Activated CD4-positive, alpha-beta T cell treated with anti-CD3 and anti-CD28 coated beads for 36 hours (primary cell): ENCODE measurements at regions of chr11 and their contacts with region 1.

Region 1: GRCh38 chr11:66311965-66312548 is 4.8 kb downstream of the CD248 start:
- DNase-seq: peak; percentile 98
- ATAC-seq: peak; percentile 83
- H3K4me3 Mint-ChIP-seq: peak overlapping the region; percentile 79
- H3K27ac Mint-ChIP-seq: peak overlapping the region; percentile 91
- H3K4me1 Mint-ChIP-seq: peaks cover 33% of the 10 kb centered on the region
- H3K27me3 Mint-ChIP-seq: no peaks in the 10 kb centered on the region

Region 2: DNA sequence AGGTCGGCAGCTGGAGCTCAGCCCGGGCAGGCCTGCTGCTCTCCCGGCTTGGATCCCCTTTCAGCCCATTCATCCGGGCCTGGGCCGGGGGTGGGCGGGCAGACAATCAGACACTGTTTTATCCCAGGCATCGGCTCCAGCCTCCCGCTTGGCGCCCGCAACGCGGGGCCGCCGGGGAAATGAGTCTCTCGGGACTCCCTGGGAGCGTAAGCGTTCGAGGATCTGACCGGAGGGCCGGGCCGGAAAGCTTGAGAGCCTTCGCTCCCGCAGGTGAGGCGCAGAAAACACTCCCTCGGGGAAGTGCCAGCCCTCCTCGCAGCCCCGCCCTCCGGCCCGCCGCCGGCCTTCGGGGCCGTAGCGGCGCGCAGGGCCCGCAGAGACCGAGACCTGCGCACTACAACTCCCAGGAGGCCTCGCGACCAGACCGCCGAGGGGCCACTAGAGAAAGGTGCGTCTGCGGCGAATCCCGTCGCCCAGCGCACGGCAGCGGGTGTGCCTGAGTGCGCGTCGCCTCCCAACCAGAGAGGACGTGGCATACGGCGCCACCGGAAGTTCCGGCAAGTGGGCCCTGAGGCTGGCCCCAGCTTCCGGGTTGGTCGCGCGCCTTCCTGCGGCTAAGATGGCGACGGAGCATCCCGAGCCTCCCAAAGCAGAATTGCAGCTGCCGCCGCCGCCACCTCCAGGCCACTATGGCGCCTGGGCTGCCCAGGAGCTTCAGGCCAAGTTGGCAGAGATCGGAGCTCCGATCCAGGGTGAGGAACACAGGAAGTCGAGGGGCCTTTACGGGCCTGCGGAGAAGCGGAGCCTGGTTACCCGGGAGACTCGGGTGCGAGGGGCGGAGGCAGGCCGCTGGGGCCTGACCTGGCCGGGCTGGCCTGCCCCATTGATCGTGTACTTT is 260.0 kb before region 1 on chr11 and contains the start of gene SF3B2:
- CTCF ChIA-PET with region 1: no interaction called
- POLR2A ChIA-PET with region 1: no interaction called
- intact Hi-C with region 1: loop called in 1 of 2 experiments (anchors 1 kb)
- DNase-seq: peak; percentile 99
- ATAC-seq: peak; percentile 99
- H3K4me3 Mint-ChIP-seq: peak within 1 kb of the TSS; percentile 91
- H3K27ac Mint-ChIP-seq: peak within 1 kb of the TSS; percentile 95
- H3K4me1 Mint-ChIP-seq: peaks cover 36% of the 10 kb centered on the region
- H3K27me3 Mint-ChIP-seq: peaks cover 4% of the 10 kb centered on the region
- total RNA-seq, gene SF3B2: 265 to 270 TPM

Region 3: DNA sequence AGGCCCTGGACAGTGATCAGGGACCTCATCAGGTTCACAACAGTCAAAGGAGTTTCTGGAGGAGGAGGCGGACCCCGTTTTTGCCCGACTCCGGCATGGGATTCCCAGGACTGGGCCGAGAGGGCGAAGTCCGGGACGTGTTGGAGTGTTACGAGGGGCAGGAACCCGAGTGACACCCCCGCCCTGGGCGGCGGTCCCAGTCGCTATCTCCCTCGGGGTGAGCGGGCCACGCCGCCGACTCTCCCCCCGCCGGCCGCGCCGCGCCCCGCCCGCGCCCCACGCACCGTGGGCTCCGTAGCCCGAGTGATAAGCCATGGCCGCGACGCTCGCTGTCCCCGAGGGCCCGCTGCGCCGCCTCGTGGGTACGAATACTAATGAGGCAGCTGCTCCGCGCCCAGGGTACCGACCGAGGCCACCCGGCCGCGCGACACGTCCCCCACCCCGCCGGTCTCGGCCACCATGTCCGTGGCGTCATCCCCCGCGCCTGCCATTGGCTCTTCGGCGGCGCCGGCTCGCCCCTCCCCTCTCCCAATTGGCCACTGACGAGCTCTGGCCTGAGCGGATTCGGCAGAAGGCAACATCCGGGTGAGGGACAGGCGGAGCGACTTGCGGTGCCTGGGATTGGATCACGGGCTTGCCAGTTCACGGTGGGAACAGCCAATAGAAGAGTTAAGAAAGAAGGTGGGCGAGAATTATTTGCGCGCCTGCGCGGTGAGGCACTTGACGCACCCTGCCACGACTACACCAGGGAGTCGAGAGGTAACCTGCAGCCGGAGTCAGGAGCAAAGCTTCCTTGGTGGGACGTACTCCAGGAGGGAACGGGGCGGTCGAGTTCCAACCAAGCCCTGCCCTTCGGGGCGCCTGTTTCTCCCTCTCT is 23.1 kb before region 1 on chr11 and contains the start of gene YIF1A:
- CTCF ChIA-PET with region 1: interaction called, 23 read pairs
- POLR2A ChIA-PET with region 1: interaction called, 8 read pairs
- intact Hi-C with region 1: loop called (anchors 1 kb)
- DNase-seq: peak; percentile 99
- ATAC-seq: peak; percentile 97
- H3K4me3 Mint-ChIP-seq: peak within 1 kb of the TSS; percentile 89
- H3K27ac Mint-ChIP-seq: peak within 1 kb of the TSS; percentile 85
- H3K4me1 Mint-ChIP-seq: peaks cover 22% of the 10 kb centered on the region
- H3K27me3 Mint-ChIP-seq: peaks cover 8% of the 10 kb centered on the region
- total RNA-seq, gene YIF1A: 47.5 to 49.8 TPM

Region 4: DNA sequence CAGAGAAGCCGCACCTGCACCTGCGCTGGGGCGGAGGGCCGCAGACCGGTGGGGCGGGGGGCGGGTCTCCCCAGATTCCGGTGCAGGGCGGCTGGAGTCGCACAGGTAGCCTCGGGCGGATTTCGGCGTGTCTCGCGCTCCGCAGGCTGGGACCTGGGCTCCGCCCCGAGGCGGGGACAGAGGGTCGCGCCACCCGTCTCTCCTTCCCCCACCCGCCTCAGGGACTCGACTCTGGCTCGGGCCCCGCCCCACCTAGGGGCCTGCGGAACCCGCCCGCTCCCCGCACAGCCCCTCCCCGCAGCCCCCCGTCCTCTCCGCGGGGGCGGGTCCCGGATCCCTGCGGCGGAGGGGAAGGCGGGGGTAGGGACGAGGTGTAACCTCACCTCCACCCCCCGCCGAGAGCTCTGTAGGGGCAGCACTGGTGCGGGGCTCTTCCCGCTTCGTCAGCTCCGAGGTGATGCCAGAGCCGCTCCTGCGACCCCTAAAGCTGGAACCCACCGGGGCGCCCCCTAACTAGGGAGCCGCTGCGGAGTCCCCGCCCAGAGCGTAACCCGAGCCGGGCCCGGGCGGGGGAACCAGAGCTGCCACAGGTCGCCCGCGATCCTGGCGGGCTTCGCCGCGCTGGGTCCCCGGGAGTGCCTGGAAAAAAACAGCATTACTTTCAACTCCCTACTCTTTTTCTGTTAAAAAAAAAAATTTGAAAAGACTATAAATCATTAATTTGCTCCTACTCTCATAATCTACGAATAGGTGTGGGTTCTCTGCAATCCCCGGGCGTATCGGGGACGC is 59.8 kb after region 1 on chr11 and contains the start of gene SLC29A2:
- CTCF ChIA-PET with region 1: no interaction called
- POLR2A ChIA-PET with region 1: no interaction called
- intact Hi-C with region 1: loop called in 1 of 2 experiments (anchors 1 kb)
- DNase-seq: peak; percentile 92
- ATAC-seq: peak; percentile 87
- H3K4me3 Mint-ChIP-seq: peak within 1 kb of the TSS; percentile 91
- H3K27ac Mint-ChIP-seq: peak within 1 kb of the TSS; percentile 91
- H3K4me1 Mint-ChIP-seq: peaks cover 19% of the 10 kb centered on the region
- H3K27me3 Mint-ChIP-seq: no peaks in the 10 kb centered on the region
- total RNA-seq, gene SLC29A2: 13.6 to 14.4 TPM

Region 5: GRCh38 chr11:66412110-66412509 is 100.1 kb after region 1 on chr11:
- CTCF ChIA-PET with region 1: no interaction called
- POLR2A ChIA-PET with region 1: no interaction called
- intact Hi-C with region 1: no loop called
- DNase-seq: no peak
- ATAC-seq: no peak
- H3K4me3 Mint-ChIP-seq: no peak overlapping the region
- H3K27ac Mint-ChIP-seq: no peak overlapping the region
- H3K4me1 Mint-ChIP-seq: peaks cover 10% of the 10 kb centered on the region
- H3K27me3 Mint-ChIP-seq: peaks cover 37% of the 10 kb centered on the region

Region 6: DNA sequence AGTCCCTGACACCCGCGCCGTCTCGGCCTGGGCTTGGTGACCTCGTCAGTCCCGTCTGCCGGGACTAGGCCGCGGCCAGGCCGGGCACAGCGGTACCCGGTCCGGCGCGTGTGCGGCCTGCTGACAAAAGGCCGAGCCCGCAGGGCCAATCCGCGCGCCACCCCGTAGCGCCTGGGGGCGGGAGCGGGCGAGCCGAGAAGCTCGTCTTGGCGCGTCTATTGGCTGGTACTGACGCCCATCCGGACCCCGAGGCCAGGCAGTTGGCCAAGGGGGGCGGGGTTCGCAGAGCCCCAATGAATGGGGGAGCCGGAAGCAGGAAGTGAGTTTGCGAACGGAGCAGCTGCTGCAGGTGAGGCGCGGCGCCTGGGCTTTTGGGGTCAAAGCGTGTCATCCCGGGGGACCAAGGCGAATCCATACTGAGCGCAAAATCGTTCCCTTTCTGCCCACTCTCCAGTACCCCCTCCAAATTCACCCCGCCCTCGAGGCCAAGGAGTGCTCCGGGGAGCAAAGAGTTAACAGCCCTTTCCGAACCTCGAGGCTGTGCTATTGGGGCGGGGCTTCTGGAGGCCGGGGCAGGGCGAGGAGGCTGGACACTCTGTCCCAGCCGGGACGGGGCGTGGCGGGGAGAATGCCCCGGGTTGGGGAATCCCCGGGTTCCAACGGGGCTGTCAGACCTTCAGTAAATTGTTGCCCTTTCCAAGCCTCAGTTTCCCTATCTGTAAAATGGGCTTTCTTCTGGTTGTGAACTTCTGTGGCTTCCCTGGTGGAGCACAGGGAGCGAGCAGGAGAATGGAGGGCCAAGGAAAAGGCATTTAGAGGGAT is 168.3 kb after region 1 on chr11 and contains the start of gene DPP3:
- CTCF ChIA-PET with region 1: no interaction called
- POLR2A ChIA-PET with region 1: no interaction called
- intact Hi-C with region 1: loop called (anchors 1 kb)
- DNase-seq: peak; percentile 98
- ATAC-seq: peak; percentile 98
- H3K4me3 Mint-ChIP-seq: peak within 1 kb of the TSS; percentile 90
- H3K27ac Mint-ChIP-seq: peak within 1 kb of the TSS; percentile 86
- H3K4me1 Mint-ChIP-seq: peaks cover 22% of the 10 kb centered on the region
- H3K27me3 Mint-ChIP-seq: no peaks in the 10 kb centered on the region
- total RNA-seq, gene DPP3: 87.1 to 91.9 TPM

Region 7: DNA sequence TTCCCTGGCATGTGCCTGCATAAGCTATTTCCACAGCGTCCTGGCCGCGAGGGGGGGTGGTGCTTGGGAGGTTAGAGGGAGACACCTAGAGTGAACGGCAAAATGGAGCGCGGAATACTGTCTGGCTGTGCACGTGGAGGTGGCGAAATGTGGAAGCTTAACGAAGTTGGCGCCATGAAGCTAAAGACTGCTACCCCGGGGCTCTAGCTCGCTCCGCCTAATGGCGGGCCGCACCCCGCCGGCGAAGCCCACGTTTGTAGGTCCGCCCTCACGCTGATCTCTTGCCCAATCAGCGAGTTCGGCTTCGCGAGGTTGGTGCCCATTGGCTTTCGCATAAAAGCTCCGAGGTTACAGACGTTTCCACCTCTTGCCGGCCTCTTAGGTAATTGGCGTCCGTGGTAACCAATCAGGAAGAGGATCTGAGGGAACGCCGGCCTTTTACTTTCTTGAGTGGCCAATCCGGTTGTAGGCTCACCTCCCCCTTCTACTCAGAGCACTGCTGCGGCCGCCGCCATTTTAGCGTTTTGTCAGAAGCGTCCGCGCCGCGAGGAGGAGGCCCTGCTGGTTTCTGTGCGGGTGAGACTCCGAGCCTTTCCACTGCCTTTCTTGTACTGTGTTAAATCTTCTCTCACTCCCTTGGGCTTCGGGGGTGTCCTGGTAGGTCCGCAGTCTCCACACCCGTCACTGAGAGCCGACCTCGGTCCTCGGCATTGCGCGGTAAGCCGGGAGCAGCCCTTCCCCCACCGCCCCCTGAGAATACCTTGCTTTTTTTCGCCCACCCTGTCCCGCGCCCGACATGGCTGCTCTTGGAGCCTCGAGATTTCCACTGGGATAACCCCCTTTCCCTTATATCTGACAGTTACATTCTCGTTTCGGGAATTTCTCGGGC is 326.4 kb after region 1 on chr11 and contains the start of gene RBM4:
- CTCF ChIA-PET with region 1: no interaction called
- POLR2A ChIA-PET with region 1: interaction called, 3 read pairs
- intact Hi-C with region 1: loop called in 1 of 2 experiments (anchors 1 kb)
- DNase-seq: peak; percentile 97
- ATAC-seq: peak; percentile 95
- H3K4me3 Mint-ChIP-seq: peak within 1 kb of the TSS; percentile 89
- H3K27ac Mint-ChIP-seq: peak within 1 kb of the TSS; percentile 97
- H3K4me1 Mint-ChIP-seq: peaks cover 65% of the 10 kb centered on the region
- H3K27me3 Mint-ChIP-seq: no peaks in the 10 kb centered on the region
- total RNA-seq, gene RBM4: 104 to 122 TPM

Region 8: DNA sequence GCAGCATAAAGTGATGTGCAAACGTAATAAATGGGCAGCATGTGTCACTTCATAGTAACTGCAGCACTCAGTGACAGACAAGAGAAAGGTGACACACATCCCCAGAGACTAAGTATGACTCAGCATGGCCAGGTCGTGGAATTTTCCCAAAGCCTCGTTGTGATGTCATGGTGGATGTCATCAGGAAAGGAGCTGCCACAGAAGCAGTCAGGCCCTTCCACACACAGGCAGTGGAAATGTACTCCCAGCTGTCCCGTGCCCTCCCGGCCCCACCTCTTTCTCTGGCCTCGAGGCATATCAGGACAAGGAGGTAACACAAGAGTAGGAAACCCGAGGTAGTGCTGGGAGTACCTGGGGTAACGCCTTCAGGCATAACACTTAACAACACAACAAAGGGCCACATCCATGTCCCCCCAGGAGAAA is 638.1 kb after region 1 on chr11:
- CTCF ChIA-PET with region 1: no interaction called
- POLR2A ChIA-PET with region 1: no interaction called
- intact Hi-C with region 1: no loop called
- DNase-seq: peak; percentile 69
- ATAC-seq: peak; percentile 93
- H3K4me3 Mint-ChIP-seq: no peak overlapping the region
- H3K27ac Mint-ChIP-seq: no peak overlapping the region
- H3K4me1 Mint-ChIP-seq: peaks cover 6% of the 10 kb centered on the region
- H3K27me3 Mint-ChIP-seq: no peaks in the 10 kb centered on the region